CD8-positive, alpha-beta T cell (primary cell): ENCODE measurements at regions of chr6 and their contacts with region 1.

Region 1: DNA sequence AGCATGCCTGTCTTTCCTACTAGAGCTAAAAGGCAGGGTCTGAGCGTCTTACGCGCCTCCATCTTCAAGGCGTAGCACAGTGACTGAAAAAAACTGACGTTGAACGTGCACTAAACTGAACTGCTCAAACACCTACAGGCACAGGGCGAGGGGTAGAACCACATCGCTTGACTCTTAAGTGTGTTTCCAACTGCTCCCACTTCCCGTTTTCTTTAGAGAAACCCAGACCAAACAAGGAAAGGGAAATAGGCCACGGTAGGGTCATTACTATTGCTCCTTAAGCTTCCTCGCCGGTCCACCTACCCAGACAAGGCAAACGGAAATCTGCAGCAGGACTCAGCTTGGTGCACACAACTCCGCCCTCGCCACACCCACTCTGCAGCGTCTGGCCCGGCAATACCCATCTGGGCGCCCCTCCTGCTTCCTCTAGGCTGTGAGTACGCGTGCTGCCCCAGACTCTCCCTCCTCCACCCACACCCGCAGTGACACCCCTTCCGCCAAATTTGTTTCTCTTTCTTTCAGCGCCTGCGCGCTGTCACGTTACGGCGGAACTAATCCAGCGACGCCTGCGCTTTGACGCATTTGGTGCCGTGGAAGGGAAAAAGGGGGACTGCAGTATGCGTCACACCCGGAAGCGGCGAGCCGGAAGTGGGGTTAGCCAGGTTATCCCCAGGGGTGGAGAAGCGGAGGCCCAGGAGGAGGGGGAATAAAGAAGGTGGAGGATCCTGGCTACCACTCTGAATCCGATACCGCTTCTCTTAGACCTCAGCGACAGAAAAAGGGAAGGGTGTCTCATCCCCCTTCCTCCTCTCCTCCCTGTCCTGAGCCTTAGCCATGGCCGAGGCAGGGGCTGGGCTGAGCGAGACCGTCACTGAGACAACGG is at the start of gene PPP1R11:
- DNase-seq: peak; percentile 96 to 100 (median 98)
- ATAC-seq: peak; percentile 96
- H3K4me3 ChIP-seq: peak within 1 kb of the TSS; percentile 95 to 98
- H3K4me3 Mint-ChIP-seq: peak within 1 kb of the TSS; percentile 100
- H3K27ac ChIP-seq: peak within 1 kb of the TSS; percentile 96 to 99
- H3K27ac Mint-ChIP-seq: peak within 1 kb of the TSS; percentile 100
- H3K4me1 ChIP-seq: peaks cover 44% of the 10 kb centered on the region
- H3K4me1 Mint-ChIP-seq: peaks cover 56% of the 10 kb centered on the region
- H3K27me3 ChIP-seq: peaks cover 0 to 1% of the 10 kb centered on the region in 2 experiments
- H3K27me3 Mint-ChIP-seq: peaks cover 12% of the 10 kb centered on the region
- CTCF ChIP-seq: no peak
- total RNA-seq, gene PPP1R11: 24.7 to 28.3 TPM

Region 2: GRCh38 chr6:29705389-29706231 is 361.2 kb before region 1 on chr6:
- CTCF ChIA-PET with region 1: no interaction called
- POLR2A ChIA-PET with region 1: interaction called, 10 read pairs
- intact Hi-C with region 1: no loop called
- DNase-seq: peak in 2 of 9 experiments; percentile 57 to 73
- ATAC-seq: no peak
- H3K4me3 ChIP-seq: no peak overlapping the region
- H3K4me3 Mint-ChIP-seq: peak overlapping the region; percentile 26
- H3K27ac ChIP-seq: no peak overlapping the region
- H3K27ac Mint-ChIP-seq: peak overlapping the region; percentile 77
- H3K4me1 ChIP-seq: peaks cover 53% of the 10 kb centered on the region
- H3K4me1 Mint-ChIP-seq: peaks cover 55% of the 10 kb centered on the region
- H3K27me3 ChIP-seq: no peaks in the 10 kb centered on the region
- H3K27me3 Mint-ChIP-seq: peaks cover 19% of the 10 kb centered on the region
- CTCF ChIP-seq: peak; percentile 79

Region 3: GRCh38 chr6:29792123-29793035 is 274.4 kb before region 1 on chr6:
- CTCF ChIA-PET with region 1: no interaction called
- POLR2A ChIA-PET with region 1: no interaction called
- intact Hi-C with region 1: loop called in 1 of 2 experiments (anchors 5 kb)
- DNase-seq: peak; percentile 65 to 88 (median 77)
- ATAC-seq: peak; percentile 91
- H3K4me3 ChIP-seq: peak overlapping the region; percentile 65 to 95
- H3K4me3 Mint-ChIP-seq: peak overlapping the region; percentile 90
- H3K27ac ChIP-seq: peak overlapping the region; percentile 58 to 84
- H3K27ac Mint-ChIP-seq: peak overlapping the region; percentile 83
- H3K4me1 ChIP-seq: peaks cover 13% of the 10 kb centered on the region
- H3K4me1 Mint-ChIP-seq: peaks cover 15% of the 10 kb centered on the region
- H3K27me3 ChIP-seq: peaks cover 0 to 8% of the 10 kb centered on the region in 2 experiments
- H3K27me3 Mint-ChIP-seq: peaks cover 32% of the 10 kb centered on the region
- CTCF ChIP-seq: no peak

Region 4: DNA sequence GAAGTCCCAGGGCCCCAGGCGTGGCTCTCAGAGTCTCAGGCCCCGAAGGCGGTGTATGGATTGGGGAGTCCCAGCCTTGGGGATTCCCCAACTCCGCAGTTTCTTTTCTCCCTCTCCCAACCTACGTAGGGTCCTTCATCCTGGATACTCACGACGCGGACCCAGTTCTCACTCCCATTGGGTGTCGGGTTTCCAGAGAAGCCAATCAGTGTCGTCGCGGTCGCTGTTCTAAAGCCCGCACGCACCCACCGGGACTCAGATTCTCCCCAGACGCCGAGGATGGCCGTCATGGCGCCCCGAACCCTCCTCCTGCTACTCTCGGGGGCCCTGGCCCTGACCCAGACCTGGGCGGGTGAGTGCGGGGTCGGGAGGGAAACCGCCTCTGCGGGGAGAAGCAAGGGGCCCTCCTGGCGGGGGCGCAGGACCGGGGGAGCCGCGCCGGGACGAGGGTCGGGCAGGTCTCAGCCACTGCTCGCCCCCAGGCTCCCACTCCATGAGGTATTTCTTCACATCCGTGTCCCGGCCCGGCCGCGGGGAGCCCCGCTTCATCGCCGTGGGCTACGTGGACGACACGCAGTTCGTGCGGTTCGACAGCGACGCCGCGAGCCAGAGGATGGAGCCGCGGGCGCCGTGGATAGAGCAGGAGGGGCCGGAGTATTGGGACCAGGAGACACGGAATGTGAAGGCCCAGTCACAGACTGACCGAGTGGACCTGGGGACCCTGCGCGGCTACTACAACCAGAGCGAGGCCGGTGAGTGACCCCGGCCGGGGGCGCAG is 124.4 kb before region 1 on chr6 and contains the start of gene HLA-A:
- CTCF ChIA-PET with region 1: no interaction called
- POLR2A ChIA-PET with region 1: no interaction called
- intact Hi-C with region 1: loop called (anchors 1 to 5 kb)
- DNase-seq: peak; percentile 86 to 98 (median 94)
- ATAC-seq: peak; percentile 84
- H3K4me3 ChIP-seq: peak within 1 kb of the TSS; percentile 75 to 82
- H3K4me3 Mint-ChIP-seq: peak within 1 kb of the TSS; percentile 94
- H3K27ac ChIP-seq: peak within 1 kb of the TSS; percentile 99 to 100
- H3K27ac Mint-ChIP-seq: peak within 1 kb of the TSS; percentile 100
- H3K4me1 ChIP-seq: peaks cover 49% of the 10 kb centered on the region
- H3K4me1 Mint-ChIP-seq: peaks cover 48% of the 10 kb centered on the region
- H3K27me3 ChIP-seq: no peaks in the 10 kb centered on the region
- H3K27me3 Mint-ChIP-seq: no peaks in the 10 kb centered on the region
- CTCF ChIP-seq: no peak
- total RNA-seq, gene HLA-A: 2,151 to 2,183 TPM

Region 5: DNA sequence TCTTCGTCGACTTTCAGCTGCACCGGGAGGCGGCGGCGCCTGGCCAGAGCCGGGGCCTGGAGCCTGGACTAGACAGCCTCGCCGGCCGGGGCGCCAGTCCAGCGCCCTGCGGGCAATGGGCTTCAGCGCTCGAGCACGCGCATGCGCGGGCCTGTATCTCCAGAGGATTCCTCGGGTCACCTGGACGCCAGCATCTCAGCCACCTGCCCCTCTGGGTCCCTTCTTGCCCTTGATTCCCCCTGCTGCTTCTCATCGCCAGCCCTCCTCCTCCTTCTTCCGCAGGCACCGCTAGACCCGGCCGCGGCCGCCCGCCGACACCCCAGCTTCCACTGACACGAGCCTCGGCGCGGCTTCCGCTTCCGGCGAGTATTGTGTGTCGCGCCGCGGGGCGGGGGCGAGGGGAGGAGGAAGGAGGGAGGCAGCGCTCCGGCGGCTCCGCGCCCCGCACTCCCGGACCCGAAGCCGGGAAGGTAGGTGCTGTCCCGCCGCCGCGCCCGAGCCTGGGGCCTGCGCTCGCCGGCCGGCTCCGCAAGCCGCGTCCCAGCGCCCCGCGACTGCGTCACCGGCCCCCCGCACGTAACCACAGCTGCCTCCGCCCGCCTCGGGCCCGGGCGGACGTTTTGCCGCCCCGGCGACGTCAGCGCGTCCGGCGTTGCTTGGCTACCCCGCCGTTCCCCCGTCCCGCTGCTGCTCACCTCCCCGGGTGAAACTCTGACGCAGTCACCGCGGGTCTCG is 259.9 kb after region 1 on chr6 and contains the start of gene TRIM39:
- CTCF ChIA-PET with region 1: no interaction called
- POLR2A ChIA-PET with region 1: interaction called, 5 read pairs
- intact Hi-C with region 1: loop called (anchors 2 kb)
- DNase-seq: peak; percentile 75 to 97 (median 90)
- ATAC-seq: peak; percentile 58
- H3K4me3 ChIP-seq: peak within 1 kb of the TSS; percentile 74 to 87
- H3K4me3 Mint-ChIP-seq: peak within 1 kb of the TSS; percentile 96
- H3K27ac ChIP-seq: peak within 1 kb of the TSS; percentile 95 to 99
- H3K27ac Mint-ChIP-seq: peak within 1 kb of the TSS; percentile 98
- H3K4me1 ChIP-seq: peaks cover 41% of the 10 kb centered on the region
- H3K4me1 Mint-ChIP-seq: peaks cover 59% of the 10 kb centered on the region
- H3K27me3 ChIP-seq: no peaks in the 10 kb centered on the region
- H3K27me3 Mint-ChIP-seq: no peaks in the 10 kb centered on the region
- CTCF ChIP-seq: no peak
- total RNA-seq, gene TRIM39: 50.7 to 58.5 TPM

Region 6: DNA sequence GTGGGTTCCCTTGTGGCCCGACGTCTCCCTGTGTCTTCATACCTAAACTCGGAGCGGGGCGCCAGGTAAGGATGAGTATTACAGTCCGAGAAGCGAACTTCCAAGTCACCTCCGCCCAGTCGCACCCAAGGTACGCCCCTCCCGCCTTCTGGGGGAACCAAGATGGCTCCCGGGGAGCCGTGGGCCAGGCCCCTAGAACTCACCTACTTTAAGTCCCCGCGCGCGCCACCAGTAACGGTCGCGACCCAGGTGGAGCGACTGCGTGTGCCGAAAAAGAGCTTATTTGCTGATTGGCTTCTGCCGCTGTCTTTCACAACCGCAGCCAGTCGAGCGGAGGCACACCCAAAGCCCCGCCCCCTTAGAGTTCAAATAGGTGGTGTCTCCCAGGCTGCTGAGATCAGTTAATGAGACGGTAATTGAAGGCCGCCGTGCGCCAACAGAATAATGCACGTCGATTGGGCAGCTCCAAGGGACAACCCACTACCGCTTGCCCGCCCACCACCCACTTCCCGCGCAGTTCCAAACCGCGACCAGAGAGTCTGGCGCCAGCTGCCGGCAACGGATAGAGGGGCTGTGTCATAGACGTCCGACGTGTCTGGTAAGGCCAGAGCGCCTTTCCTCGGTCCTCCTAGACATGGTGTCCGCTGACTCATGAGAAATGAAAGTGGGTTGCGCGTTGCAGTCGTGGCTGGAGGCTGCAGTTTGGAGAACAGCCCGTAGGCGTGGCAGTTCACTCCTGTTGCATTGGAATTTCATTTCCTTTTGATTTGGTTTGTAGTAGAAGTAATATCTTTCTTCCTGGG is 650.4 kb after region 1 on chr6 and contains the start of gene MDC1:
- CTCF ChIA-PET with region 1: no interaction called
- POLR2A ChIA-PET with region 1: no interaction called
- intact Hi-C with region 1: loop called in 1 of 2 experiments (anchors 10 kb)
- DNase-seq: peak; percentile 97 to 100 (median 98)
- ATAC-seq: peak; percentile 72
- H3K4me3 ChIP-seq: peak within 1 kb of the TSS; percentile 69 to 70
- H3K4me3 Mint-ChIP-seq: peak within 1 kb of the TSS; percentile 92
- H3K27ac ChIP-seq: peak within 1 kb of the TSS; percentile 83 to 90
- H3K27ac Mint-ChIP-seq: peak within 1 kb of the TSS; percentile 99
- H3K4me1 ChIP-seq: peaks cover 23% of the 10 kb centered on the region
- H3K4me1 Mint-ChIP-seq: peaks cover 51% of the 10 kb centered on the region
- H3K27me3 ChIP-seq: no peaks in the 10 kb centered on the region
- H3K27me3 Mint-ChIP-seq: no peaks in the 10 kb centered on the region
- CTCF ChIP-seq: peak; percentile 47
- total RNA-seq, gene MDC1: 38.9 to 48.8 TPM

Region 7: GRCh38 chr6:30742316-30743098 is 675.7 kb after region 1 on chr6 and contains the start of gene FLOT1:
- CTCF ChIA-PET with region 1: no interaction called
- POLR2A ChIA-PET with region 1: no interaction called
- intact Hi-C with region 1: no loop called
- DNase-seq: peak; percentile 66 to 93 (median 80)
- ATAC-seq: peak; percentile 60
- H3K4me3 ChIP-seq: peak within 1 kb of the TSS; percentile 75 to 84
- H3K4me3 Mint-ChIP-seq: peak within 1 kb of the TSS; percentile 91
- H3K27ac ChIP-seq: peak within 1 kb of the TSS; percentile 49 to 68
- H3K27ac Mint-ChIP-seq: peak within 1 kb of the TSS; percentile 85
- H3K4me1 ChIP-seq: peaks cover 45% of the 10 kb centered on the region
- H3K4me1 Mint-ChIP-seq: peaks cover 60% of the 10 kb centered on the region
- H3K27me3 ChIP-seq: no peaks in the 10 kb centered on the region
- H3K27me3 Mint-ChIP-seq: no peaks in the 10 kb centered on the region
- CTCF ChIP-seq: no peak
- total RNA-seq, gene FLOT1: 27.5 to 27.8 TPM

Region 8: DNA sequence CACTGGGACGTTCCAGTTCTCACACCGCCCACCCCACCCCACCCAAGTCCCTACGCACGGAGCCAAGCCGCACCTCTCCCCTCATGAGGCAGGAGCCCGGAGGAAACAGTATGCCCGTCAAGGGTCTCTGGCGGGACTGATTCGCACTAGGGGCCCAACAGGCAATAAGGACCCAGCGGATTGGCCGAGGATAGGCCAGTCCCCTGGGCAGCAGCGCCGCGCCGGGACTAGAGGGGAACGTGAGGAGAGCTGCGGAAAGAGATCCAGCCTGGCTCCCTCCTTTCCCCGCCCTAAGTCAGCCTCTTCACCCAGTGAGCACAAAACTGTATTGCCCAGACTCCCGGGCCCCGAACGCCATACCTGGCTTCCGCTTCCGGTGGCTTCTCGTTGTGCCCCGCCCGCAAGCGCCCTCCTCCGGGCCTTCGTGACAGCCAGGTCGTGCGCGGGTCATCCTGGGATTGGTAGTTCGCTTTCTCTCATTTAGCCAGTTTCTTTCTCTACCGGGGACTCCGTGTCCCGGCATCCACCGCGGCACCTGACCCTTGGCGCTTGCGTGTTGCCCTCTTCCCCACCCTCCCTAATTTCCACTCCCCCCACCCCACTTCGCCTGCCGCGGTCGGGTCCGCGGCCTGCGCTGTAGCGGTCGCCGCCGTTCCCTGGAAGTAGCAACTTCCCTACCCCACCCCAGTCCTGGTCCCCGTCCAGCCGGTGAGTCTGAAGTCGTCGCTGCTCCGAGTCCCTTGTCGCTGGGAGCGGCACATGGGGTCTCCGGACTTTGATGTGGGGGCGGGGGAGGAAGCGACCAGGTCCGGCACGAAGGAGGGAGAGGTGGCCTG is 1598.9 kb after region 1 on chr6 and contains the start of gene CSNK2B:
- CTCF ChIA-PET with region 1: no interaction called
- POLR2A ChIA-PET with region 1: no interaction called
- intact Hi-C with region 1: loop called in 1 of 2 experiments (anchors 10 kb)
- DNase-seq: peak; percentile 95 to 99 (median 98)
- ATAC-seq: peak; percentile 84
- H3K4me3 ChIP-seq: peak within 1 kb of the TSS; percentile 91 to 94
- H3K4me3 Mint-ChIP-seq: peak within 1 kb of the TSS; percentile 95
- H3K27ac ChIP-seq: peak within 1 kb of the TSS; percentile 96 to 99
- H3K27ac Mint-ChIP-seq: peak within 1 kb of the TSS; percentile 98
- H3K4me1 ChIP-seq: peaks cover 44% of the 10 kb centered on the region
- H3K4me1 Mint-ChIP-seq: peaks cover 56% of the 10 kb centered on the region
- H3K27me3 ChIP-seq: no peaks in the 10 kb centered on the region
- H3K27me3 Mint-ChIP-seq: no peaks in the 10 kb centered on the region
- CTCF ChIP-seq: no peak
- total RNA-seq, gene CSNK2B: 80.9 to 86.1 TPM